Activated T-helper 1 cell treated with anti-CD3 and anti-CD28 coated beads, Interleukin-12 subunit alpha, Interleukin-12 subunit beta, Interleukin-2, Interleukin-4 antibody, amounts not matched to agents 30 ng/mL and 10 ng/mL and 1 ng/mL, durations not matched to agents 14 hours and 24 hours and 36 hours (primary cell): ENCODE measurements at regions of chr7 and their contacts with region 1.

Region 1: DNA sequence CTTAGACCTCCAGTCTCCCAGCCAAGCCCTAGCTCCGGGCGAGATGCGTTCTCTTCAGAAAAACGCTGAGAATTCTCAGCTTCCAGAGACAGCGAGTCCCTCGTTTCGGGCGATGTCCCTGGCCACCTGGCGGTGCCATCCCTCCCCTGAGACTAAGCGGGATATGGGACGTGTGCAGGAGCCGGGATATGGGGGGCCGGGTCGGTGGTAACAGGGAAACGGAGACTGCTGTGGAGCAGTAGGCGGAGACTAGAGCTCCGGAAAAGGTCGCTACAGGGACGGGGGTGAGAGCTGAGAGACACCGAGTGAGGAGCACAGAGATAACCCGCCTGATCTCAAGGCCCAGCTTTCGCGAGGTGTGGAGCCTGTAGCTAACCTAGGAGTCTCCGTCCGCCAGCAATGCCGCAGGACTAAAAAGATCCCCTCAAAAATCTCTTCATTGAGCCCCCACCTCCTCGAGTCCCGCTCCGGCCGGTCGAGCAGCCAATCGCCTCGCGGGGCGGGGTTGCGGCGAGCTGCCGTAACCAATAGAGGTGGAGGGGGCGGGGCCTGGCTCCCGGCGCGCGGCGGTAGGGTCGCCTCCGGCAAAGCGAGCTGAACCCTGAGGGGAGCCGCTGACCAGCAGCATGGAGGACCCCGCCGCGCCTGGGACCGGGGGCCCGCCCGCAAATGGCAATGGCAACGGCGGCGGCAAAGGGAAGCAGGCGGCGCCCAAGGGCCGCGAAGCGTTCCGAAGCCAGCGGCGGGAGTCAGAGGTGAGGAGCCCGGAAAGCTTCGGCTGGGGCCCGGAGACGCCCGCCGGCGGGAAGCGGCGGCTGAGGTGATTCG is at the start of gene STRIP2:
- DNase-seq: peak; percentile 94
- H3K4me3 Mint-ChIP-seq: peak within 1 kb of the TSS; percentile 95
- H3K27ac Mint-ChIP-seq: peak within 1 kb of the TSS; percentile 92
- H3K4me1 Mint-ChIP-seq: peaks cover 35% of the 10 kb centered on the region
- H3K27me3 Mint-ChIP-seq: no peaks in the 10 kb centered on the region
- total RNA-seq, gene STRIP2: 74.0 and 79.4 TPM in 2 replicates

Region 2: GRCh38 chr7:128455551-128456254 is 978.4 kb before region 1 on chr7 and contains the start of gene HILPDA:
- intact Hi-C with region 1: loop called (anchors 10 kb)
- DNase-seq: peak; percentile 95
- H3K4me3 Mint-ChIP-seq: peak within 1 kb of the TSS; percentile 96
- H3K27ac Mint-ChIP-seq: peak within 1 kb of the TSS; percentile 99
- H3K4me1 Mint-ChIP-seq: peaks cover 67% of the 10 kb centered on the region
- H3K27me3 Mint-ChIP-seq: peaks cover 16% of the 10 kb centered on the region
- total RNA-seq, gene HILPDA: 53.7 and 56.9 TPM in 2 replicates

Region 3: DNA sequence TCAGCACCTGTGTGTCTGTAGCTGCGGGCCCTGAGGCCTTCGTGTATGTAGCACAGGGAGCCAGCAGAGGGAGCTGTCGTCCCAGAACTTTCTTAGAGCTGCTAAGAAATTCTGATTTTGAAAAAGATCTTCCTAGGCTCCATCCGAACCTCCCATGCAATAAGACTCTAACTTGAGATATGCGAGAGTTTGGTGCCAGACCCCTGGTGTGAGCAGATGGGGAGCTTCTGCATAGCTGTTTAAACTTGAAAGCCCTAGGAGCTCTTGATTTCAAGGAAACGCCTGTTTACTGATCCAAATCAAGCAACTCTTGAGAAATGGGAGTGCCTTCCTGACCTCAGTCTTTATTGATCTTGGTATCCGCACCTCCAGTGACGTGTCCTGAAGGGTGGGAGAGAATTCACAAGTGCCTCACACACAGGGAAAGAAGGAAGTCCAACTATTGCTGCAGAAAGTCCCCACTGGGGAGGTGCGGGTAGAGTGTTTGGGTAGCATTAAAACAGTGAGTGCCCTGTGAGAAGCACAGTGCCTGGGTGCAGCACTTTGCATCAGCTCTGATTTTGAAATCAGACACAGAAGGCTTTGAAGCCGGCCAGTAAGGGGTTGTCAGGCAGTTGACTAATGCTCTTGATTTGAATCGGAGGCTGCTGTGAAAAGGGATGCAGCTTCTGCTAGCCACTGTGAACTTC is 66.2 kb before region 1 on chr7:
- intact Hi-C with region 1: loop called (anchors 1 kb)
- DNase-seq: peak; percentile 68
- H3K4me3 Mint-ChIP-seq: peak overlapping the region; percentile 73
- H3K27ac Mint-ChIP-seq: peak overlapping the region; percentile 88
- H3K4me1 Mint-ChIP-seq: peaks cover 58% of the 10 kb centered on the region
- H3K27me3 Mint-ChIP-seq: no peaks in the 10 kb centered on the region

Region 4: GRCh38 chr7:129468087-129468486 is 34.0 kb after region 1 on chr7:
- intact Hi-C with region 1: loop called (anchors 1 kb)
- DNase-seq: no peak
- H3K4me3 Mint-ChIP-seq: no peak overlapping the region
- H3K27ac Mint-ChIP-seq: no peak overlapping the region
- H3K4me1 Mint-ChIP-seq: peaks cover 31% of the 10 kb centered on the region
- H3K27me3 Mint-ChIP-seq: no peaks in the 10 kb centered on the region

Region 5: GRCh38 chr7:129530795-129531391 is 96.8 kb after region 1 on chr7:
- intact Hi-C with region 1: loop called (anchors 1 kb)
- DNase-seq: peak; percentile 8
- H3K4me3 Mint-ChIP-seq: no peak overlapping the region
- H3K27ac Mint-ChIP-seq: peak overlapping the region; percentile 79
- H3K4me1 Mint-ChIP-seq: peaks cover 12% of the 10 kb centered on the region
- H3K27me3 Mint-ChIP-seq: no peaks in the 10 kb centered on the region

Region 6: DNA sequence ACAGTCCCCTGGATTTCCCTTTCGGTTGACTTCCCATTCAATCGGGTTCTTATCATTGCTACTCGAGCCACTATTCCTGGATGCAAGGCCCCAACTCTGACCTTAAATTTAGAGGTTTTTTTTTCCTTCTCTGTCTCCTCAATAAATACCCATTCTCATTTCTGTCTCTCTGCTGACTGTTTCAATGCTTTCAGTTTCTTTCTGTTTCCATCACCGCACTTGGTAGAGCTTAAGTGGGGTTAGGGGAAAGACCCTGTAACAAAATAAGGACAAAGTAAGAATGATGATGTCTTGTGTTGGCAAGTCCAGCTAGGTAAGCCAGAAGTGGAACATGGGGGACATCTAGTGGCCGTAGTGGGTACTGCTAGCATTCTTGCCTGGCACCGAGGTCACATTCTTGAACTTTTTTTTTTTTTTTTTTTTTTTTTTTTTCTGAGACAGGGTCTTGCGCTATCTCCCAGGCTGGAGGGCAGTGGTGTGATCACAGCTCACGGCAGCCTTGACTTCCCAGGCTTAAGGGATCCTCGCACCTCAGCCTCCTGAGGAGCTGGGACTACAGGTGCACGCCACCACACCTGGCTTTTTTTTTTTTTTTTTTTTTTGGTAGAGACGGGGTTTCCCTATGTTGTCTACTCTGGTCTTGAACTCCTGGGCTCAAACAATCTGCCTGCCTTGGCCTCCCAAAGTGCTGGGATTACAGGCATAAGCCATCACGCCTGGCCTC is 576.8 kb after region 1 on chr7:
- intact Hi-C with region 1: loop called (anchors 1 kb)
- DNase-seq: peak; percentile 76
- H3K4me3 Mint-ChIP-seq: no peak overlapping the region
- H3K27ac Mint-ChIP-seq: peak overlapping the region; percentile 75
- H3K4me1 Mint-ChIP-seq: peaks cover 5% of the 10 kb centered on the region
- H3K27me3 Mint-ChIP-seq: no peaks in the 10 kb centered on the region